ENCODE measurements at regions of chr2 and their contacts with region 1.

Region 1: GRCh38 chr2:176814306-176815052 is 398.1 kb upstream of the HNRNPA3 start:
- DNase-seq: no peak
- H3K4me3 ChIP-seq: peak overlapping the region in 1 of 8 donors; percentile 17
- H3K27ac ChIP-seq: no peak overlapping the region
- H3K4me1 ChIP-seq: peaks cover 0 to 24% (median 9%) of the 10 kb centered on the region in 6 donors
- H3K27me3 ChIP-seq: no peaks in the 10 kb centered on the region
- CTCF ChIP-seq: peak in 8 of 11 experiments; percentile 36 to 62 (median 56)
- POLR2A ChIP-seq: no peak

Region 2: GRCh38 chr2:176096986-176097819 is 717.3 kb before region 1 on chr2:
- intact Hi-C with region 1: no loop called
- DNase-seq: peak; percentile 90
- H3K4me3 ChIP-seq: peak overlapping the region; percentile 15 to 67 (median 38)
- H3K27ac ChIP-seq: no peak overlapping the region
- H3K4me1 ChIP-seq: peaks cover 10 to 61% (median 49%) of the 10 kb centered on the region in 6 donors
- H3K27me3 ChIP-seq: peaks cover 28 to 100% (median 100%) of the 10 kb centered on the region in 7 donors
- CTCF ChIP-seq: peak; percentile 50 to 84 (median 76)
- POLR2A ChIP-seq: no peak

Region 3: GRCh38 chr2:176110975-176111663 is 703.4 kb before region 1 on chr2:
- intact Hi-C with region 1: loop called (anchors 10 kb)
- DNase-seq: no peak
- H3K4me3 ChIP-seq: no peak overlapping the region
- H3K27ac ChIP-seq: no peak overlapping the region
- H3K4me1 ChIP-seq: peaks cover 10 to 43% (median 25%) of the 10 kb centered on the region in 6 donors
- H3K27me3 ChIP-seq: peaks cover 20 to 100% (median 97%) of the 10 kb centered on the region in 7 donors
- CTCF ChIP-seq: peak in 7 of 11 experiments; percentile 33 to 52 (median 40)
- POLR2A ChIP-seq: no peak

Region 4: GRCh38 chr2:177148477-177149154 is 334.1 kb after region 1 on chr2:
- intact Hi-C with region 1: loop called (anchors 10 kb)
- DNase-seq: peak; percentile 89
- H3K4me3 ChIP-seq: peak overlapping the region; percentile 22 to 73 (median 38)
- H3K27ac ChIP-seq: no peak overlapping the region
- H3K4me1 ChIP-seq: peaks cover 7 to 25% (median 12%) of the 10 kb centered on the region in 6 donors
- H3K27me3 ChIP-seq: peaks cover 0 to 23% (median 6%) of the 10 kb centered on the region in 7 donors
- CTCF ChIP-seq: peak; percentile 58 to 83 (median 72)
- POLR2A ChIP-seq: no peak

Measured in spleen (tissue), 13 donors.